ENCODE measurements at regions of chr9 and their contacts with region 1.

Region 1: DNA sequence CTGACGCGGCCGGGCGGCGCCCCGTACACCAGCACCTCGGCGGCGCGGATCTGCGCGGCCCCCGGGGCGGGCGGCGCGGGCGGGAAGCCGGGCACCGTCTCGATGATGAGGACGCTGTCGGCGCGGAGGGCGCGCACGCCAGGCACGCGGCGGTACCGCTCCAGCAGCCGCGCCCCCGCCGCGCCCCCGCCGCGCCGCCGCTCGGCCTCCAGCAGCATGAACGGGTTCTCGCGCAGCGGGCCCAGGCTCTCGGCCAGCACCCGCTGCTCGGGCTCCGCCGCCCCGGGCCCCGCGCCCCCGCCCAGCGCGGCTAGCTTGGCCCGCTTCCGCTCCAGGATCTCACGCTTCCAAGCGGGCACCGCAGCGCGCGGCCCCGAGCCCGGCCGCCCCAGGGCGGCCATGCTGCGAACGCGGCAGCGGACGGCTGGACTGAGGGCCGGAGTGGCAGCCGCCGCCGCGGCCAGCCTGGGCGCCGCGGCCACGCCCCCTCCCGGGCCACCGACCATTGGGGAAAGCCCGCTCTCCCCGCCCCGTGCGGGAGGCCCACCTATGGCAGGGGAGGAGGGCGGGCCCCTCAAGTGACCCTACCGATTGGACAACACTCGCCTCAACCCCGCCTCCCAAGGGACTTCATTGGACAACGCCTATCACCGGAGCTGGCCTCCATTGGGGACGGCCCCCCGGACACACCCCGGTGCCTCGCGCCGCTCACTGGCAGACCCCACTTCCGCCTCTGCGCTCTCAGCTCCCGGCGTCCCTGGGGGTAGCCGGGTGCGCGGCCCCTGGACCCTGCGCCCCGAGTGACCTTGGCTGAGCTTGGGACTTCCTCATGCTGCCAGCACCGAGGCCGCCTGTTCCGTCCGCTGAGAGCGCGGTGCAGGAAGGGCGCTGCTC is at the start of gene TPRN:
- DNase-seq: peak; percentile 99
- H3K4me3 Mint-ChIP-seq: peak within 1 kb of the TSS; percentile 78
- H3K27ac Mint-ChIP-seq: peak within 1 kb of the TSS; percentile 70
- H3K4me1 Mint-ChIP-seq: peaks cover 35% of the 10 kb centered on the region
- H3K27me3 Mint-ChIP-seq: no peaks in the 10 kb centered on the region
- total RNA-seq, gene TPRN: 8.5 to 9.4 TPM

Region 2: DNA sequence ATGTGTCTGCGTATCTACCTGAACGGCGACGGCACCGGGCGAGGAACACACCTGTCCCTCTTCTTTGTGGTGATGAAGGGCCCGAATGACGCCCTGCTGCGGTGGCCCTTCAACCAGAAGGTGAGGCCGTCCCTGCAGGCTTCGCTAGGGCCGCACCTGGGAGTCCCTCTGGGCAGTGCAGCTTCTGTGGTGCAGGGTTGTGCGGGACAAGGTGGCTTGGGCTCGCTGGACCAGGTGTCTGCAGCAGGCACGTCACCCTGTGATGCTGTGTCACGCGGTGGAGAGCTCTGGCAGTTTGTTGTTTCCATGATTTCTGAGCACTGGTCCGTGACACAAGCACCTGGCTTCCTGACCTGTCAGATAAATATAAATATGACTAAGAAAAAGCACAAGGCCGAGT is 276.7 kb before region 1 on chr9:
- CTCF ChIA-PET with region 1: no interaction called
- POLR2A ChIA-PET with region 1: no interaction called
- DNase-seq: no peak
- H3K4me3 Mint-ChIP-seq: no peak overlapping the region
- H3K27ac Mint-ChIP-seq: no peak overlapping the region
- H3K4me1 Mint-ChIP-seq: peaks cover 7% of the 10 kb centered on the region
- H3K27me3 Mint-ChIP-seq: no peaks in the 10 kb centered on the region

Region 3: GRCh38 chr9:137188490-137189296 is 11.9 kb before region 1 on chr9 and contains the starts of genes ANAPC2 and SSNA1:
- CTCF ChIA-PET with region 1: interaction called, 12 read pairs
- POLR2A ChIA-PET with region 1: interaction called, 26 read pairs
- DNase-seq: peak; percentile 94
- H3K4me3 Mint-ChIP-seq: peak within 1 kb of the TSS; percentile 93
- H3K27ac Mint-ChIP-seq: peak within 1 kb of the TSS; percentile 97
- H3K4me1 Mint-ChIP-seq: peaks cover 40% of the 10 kb centered on the region
- H3K27me3 Mint-ChIP-seq: no peaks in the 10 kb centered on the region
- total RNA-seq, gene ANAPC2: 53.3 to 57.8 TPM
- total RNA-seq, gene SSNA1: 70.0 to 76.3 TPM

Region 4: GRCh38 chr9:137266162-137266527 is 65.6 kb after region 1 on chr9:
- CTCF ChIA-PET with region 1: no interaction called
- POLR2A ChIA-PET with region 1: no interaction called
- DNase-seq: no peak
- H3K4me3 Mint-ChIP-seq: no peak overlapping the region
- H3K27ac Mint-ChIP-seq: no peak overlapping the region
- H3K4me1 Mint-ChIP-seq: peaks cover 8% of the 10 kb centered on the region
- H3K27me3 Mint-ChIP-seq: no peaks in the 10 kb centered on the region

Region 5: GRCh38 chr9:137333016-137333671 is 132.6 kb after region 1 on chr9:
- CTCF ChIA-PET with region 1: no interaction called
- POLR2A ChIA-PET with region 1: no interaction called
- DNase-seq: no peak
- H3K4me3 Mint-ChIP-seq: no peak overlapping the region
- H3K27ac Mint-ChIP-seq: no peak overlapping the region
- H3K4me1 Mint-ChIP-seq: no peaks in the 10 kb centered on the region
- H3K27me3 Mint-ChIP-seq: peaks cover 1% of the 10 kb centered on the region